CD4-positive, alpha-beta memory T cell (primary cell): ENCODE measurements at regions of chr10 and their contacts with region 1.

Region 1: DNA sequence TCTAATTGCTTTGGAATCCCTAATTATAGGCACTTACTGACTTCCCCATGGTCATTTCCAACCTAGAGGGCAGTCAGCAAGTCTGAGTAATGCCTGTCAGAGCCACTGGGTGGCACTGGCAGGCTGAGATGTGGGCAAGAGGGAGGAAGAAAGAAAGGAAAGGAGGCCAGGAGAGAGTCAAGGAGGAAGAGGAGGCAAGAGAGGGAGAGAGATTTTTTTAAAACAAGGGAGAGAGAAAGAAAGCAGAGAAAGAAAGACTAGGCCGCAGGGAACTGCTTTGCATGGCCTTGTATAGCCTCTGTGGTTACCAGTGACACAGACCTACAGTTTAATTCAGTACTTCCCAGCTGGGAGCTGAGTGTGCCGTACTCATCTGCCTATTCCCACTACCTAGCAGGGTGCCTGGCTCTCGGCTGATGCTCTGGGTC is 210.4 kb upstream of the ADO start:
- DNase-seq: peak; percentile 38 to 59 (median 44)
- H3K4me3 ChIP-seq: no peak overlapping the region
- H3K4me3 Mint-ChIP-seq: peak overlapping the region in 1 of 8 donors; percentile 10
- H3K27ac ChIP-seq: no peak overlapping the region
- H3K27ac Mint-ChIP-seq: peak overlapping the region in 1 of 7 donors; percentile 9
- H3K4me1 ChIP-seq: no peaks in the 10 kb centered on the region
- H3K4me1 Mint-ChIP-seq: peaks cover 0 to 4% (median under 1%) of the 10 kb centered on the region in 4 donors
- H3K27me3 ChIP-seq: no peaks in the 10 kb centered on the region
- H3K27me3 Mint-ChIP-seq: peaks cover 3 to 5% of the 10 kb centered on the region in 2 donors

Region 2: DNA sequence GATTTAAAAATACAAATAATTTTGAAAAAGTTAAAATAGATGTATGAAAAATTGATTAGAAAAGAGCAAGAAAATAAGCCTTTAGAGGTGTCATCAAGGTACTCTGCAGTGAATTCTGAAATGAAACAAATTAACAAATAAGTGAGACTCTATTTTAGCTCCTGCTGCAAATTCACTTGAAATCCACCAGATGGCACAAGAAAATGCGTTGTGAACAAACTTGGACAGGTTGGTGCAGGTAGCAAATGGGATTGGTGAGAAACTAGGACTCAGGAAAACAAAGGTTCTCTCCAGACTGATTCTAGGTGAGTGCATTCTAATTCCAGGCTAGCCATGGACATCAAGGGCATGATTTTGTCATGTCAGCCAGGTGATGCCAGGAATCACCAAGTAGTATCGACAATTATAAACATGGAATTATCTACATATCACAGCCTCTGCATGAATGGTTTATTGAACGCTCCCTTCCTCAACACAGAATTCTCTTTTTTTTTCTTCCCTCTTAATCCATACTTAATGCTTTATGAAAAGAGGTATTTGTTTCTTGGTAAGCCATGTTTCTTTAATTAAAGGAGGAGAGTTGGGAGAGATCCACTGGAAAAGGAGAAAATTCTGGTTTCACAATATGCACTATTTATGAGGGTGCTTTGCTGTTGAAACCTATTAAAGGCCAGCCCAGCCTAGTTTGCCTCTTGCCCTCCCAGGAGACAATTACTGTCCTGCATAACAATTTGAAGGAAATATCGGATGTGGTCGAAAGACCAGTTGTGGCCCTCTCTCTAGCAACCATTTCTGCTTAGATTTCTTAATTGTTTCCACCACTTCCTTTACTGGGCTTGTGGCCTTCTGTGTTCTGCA is 101.9 kb before region 1 on chr10:
- CTCF ChIA-PET with region 1: no interaction called
- POLR2A ChIA-PET with region 1: no interaction called
- intact Hi-C with region 1: loop called (anchors 1 kb)
- DNase-seq: peak in 4 of 5 donors; percentile 12 to 35 (median 23)
- H3K4me3 ChIP-seq: no peak overlapping the region
- H3K4me3 Mint-ChIP-seq: no peak overlapping the region
- H3K27ac ChIP-seq: no peak overlapping the region
- H3K27ac Mint-ChIP-seq: no peak overlapping the region
- H3K4me1 ChIP-seq: no peaks in the 10 kb centered on the region
- H3K4me1 Mint-ChIP-seq: peaks cover 0 to 2% (median 0%) of the 10 kb centered on the region in 4 donors
- H3K27me3 ChIP-seq: no peaks in the 10 kb centered on the region
- H3K27me3 Mint-ChIP-seq: peaks cover 1 to 2% of the 10 kb centered on the region in 2 donors

Region 3: DNA sequence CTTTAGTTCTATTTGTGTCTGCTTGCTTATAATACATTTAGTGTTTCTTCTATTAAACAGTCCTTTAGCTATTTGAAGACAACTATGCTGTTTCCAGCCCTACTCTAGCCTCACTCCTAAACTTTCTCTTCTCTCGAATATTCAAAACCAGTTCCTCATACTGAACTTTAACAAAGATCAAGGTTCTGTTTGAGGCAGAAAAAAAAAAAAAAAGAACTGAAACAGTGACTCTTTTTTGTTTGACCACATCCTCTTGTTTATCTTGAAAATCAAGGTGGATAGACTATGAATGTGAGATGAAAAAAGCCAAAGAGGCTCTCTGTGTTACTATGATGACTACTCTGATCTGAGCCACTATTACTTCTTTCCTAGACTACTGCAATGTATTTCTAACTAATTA is 65.7 kb before region 1 on chr10:
- CTCF ChIA-PET with region 1: interaction called, 3 read pairs
- POLR2A ChIA-PET with region 1: no interaction called
- intact Hi-C with region 1: loop called (anchors 5 kb)
- DNase-seq: peak in 4 of 5 donors; percentile 62 to 77 (median 72)
- H3K4me3 ChIP-seq: no peak overlapping the region
- H3K4me3 Mint-ChIP-seq: peak overlapping the region; percentile 4 to 78 (median 65)
- H3K27ac ChIP-seq: no peak overlapping the region
- H3K27ac Mint-ChIP-seq: peak overlapping the region; percentile 45 to 87 (median 63)
- H3K4me1 ChIP-seq: peaks cover 39% of the 10 kb centered on the region
- H3K4me1 Mint-ChIP-seq: peaks cover 30 to 41% (median 34%) of the 10 kb centered on the region in 4 donors
- H3K27me3 ChIP-seq: no peaks in the 10 kb centered on the region
- H3K27me3 Mint-ChIP-seq: peaks cover 0 to 1% of the 10 kb centered on the region in 2 donors

Region 4: DNA sequence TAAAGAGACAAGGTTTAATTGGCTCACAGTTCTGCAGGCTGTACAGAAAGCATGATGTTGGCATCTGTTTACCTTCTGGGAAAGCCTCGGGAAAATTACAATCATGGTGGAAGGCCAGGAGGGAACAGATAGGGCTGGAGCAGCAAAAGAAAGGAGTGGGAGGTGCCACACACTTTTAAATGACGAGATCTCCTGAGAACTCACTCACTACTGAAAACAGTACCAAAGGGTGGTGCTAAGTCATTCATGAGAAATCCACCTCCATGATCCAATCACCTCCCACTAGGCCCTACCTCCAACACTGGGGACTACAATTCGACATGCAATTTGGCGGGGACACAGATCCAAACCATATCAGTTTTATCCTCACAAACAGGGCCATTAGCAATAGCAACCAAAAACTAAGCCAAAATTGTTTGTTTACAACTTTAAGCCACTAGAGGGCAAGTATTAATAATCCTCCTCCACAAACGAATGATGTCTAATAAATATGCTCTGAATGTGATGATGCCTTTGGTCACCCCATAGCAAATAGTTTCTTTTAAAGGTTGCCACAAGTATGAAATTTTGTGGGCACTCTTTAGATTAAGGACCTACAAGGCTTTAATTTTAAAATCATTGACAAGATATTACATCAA is 409.8 kb after region 1 on chr10:
- CTCF ChIA-PET with region 1: no interaction called
- POLR2A ChIA-PET with region 1: no interaction called
- intact Hi-C with region 1: loop called (anchors 5 kb)
- DNase-seq: peak in 1 of 5 donors; percentile 6
- H3K4me3 ChIP-seq: no peak overlapping the region
- H3K4me3 Mint-ChIP-seq: no peak overlapping the region
- H3K27ac ChIP-seq: no peak overlapping the region
- H3K27ac Mint-ChIP-seq: no peak overlapping the region
- H3K4me1 ChIP-seq: no peaks in the 10 kb centered on the region
- H3K4me1 Mint-ChIP-seq: peaks cover 0 to 1% (median 0%) of the 10 kb centered on the region in 4 donors
- H3K27me3 ChIP-seq: no peaks in the 10 kb centered on the region
- H3K27me3 Mint-ChIP-seq: peaks cover 4 to 20% of the 10 kb centered on the region in 2 donors

Region 5: DNA sequence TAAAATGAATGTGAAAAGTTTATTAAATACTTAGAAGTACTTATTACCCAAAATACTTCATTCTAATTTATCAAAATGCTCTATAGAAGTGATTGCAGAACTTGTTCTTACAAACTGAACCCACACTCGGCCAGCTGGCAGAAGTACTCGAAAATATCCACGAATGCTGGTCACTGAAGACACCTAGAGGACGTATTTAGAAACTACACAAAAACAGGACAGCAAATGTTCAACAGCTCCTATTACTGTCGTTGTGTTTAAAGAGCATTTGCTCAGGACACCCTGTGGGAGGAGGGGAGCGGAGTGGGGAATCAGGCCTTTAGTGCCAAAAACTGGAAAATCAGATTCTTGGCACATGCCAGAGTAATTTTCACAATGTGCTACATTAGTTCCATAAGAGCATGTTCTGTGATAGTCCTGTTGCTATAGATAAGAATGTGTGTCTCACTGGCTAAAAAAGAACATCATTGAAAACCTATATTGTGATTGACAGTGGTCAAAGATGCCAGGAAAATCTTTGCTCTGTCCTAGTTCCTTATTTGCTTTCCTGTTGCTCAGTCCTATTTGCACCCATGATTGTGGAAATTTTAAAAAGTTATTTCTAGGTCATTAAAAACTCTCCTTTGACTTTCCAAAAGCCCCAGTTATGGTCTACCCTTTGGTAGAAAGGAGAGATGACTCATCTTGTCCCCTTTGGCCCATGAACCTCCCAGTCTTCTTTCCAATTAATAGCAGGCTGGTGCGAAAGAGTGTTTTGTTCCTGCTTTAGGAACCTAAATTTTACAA is 490.0 kb after region 1 on chr10:
- CTCF ChIA-PET with region 1: interaction called, 14 read pairs
- POLR2A ChIA-PET with region 1: no interaction called
- intact Hi-C with region 1: no loop called
- DNase-seq: peak; percentile 40 to 49 (median 48)
- H3K4me3 ChIP-seq: no peak overlapping the region
- H3K4me3 Mint-ChIP-seq: no peak overlapping the region
- H3K27ac ChIP-seq: no peak overlapping the region
- H3K27ac Mint-ChIP-seq: no peak overlapping the region
- H3K4me1 ChIP-seq: no peaks in the 10 kb centered on the region
- H3K4me1 Mint-ChIP-seq: peaks cover 0 to 1% (median 0%) of the 10 kb centered on the region in 4 donors
- H3K27me3 ChIP-seq: no peaks in the 10 kb centered on the region
- H3K27me3 Mint-ChIP-seq: peaks cover 8 to 12% of the 10 kb centered on the region in 2 donors